ENCODE measurements at regions of chr2 and their contacts with region 1.

Region 1: DNA sequence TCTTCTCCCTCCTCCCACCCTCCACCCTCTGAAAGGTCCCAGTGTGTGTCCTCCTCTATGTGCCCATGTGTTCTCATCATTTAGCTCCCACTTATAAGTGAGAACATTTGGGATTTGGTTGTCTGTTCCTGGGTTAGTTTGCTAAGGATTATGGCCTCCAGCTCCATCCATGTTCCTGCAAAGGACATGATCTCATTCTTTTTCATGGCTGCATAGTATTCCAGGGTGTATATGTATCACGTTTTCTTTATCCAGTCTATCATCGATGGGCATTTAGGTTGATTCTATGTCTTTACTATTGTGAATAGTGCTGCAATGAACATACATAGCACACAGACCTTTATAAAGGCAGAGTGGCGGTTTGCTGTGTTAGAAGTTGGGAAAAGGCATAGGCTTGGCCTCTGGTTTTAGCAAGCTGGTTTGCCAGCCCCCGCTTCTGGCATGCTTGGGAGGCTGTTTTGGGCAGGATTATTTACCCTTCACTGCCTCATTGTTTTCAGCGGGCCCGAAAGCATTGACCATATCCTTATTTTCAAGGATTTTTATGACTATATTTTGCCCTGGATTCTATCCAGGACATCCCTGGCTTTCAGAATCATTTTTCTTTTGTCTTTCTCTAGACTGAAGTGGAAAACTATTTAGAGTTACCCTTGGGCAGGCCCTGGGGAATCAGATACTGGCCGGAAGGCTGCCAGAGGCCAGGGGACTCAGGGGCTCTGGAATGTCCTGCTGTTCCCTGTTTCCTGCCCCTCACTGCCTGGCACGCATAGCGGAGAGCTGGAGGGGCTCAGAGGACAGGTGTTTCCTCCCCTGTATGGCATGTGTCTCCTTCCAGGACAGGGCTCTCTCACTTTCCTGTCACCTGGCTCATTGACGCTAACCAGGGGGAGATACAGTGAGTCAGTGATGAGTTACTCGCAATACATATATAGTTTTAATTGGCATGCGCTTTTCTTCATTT is 38.5 kb downstream of the DYSF start:
- DNase-seq: peak; percentile 98
- H3K4me3 ChIP-seq: no peak overlapping the region
- H3K27ac ChIP-seq: peak overlapping the region; percentile 96
- H3K4me1 ChIP-seq: peaks cover 41% of the 10 kb centered on the region
- H3K27me3 ChIP-seq: no peaks in the 10 kb centered on the region
- CTCF ChIP-seq: no peak
- POLR2A ChIP-seq: peak; percentile 72

Region 2: DNA sequence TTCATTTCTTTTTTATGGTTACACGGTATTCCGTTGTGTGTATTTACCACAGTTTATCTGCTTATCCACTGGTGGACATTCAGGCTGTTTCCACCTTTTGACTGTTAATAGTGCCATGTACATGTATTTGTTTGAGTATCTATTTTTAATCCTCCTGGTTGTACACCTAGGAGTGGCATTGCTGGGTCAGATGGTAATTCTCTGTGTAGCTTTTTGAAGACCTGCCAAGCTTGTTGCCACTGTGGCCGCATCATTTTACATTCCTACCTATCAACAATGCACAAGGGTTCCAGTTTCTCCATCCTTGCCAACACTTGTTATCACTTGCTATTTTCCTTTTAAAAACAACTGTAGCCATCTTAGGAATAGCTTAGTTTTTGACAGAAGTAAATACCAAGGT is 348.0 kb before region 1 on chr2:
- CTCF ChIA-PET with region 1: no interaction called
- POLR2A ChIA-PET with region 1: no interaction called
- dilution Hi-C with region 1: no loop called
- intact Hi-C with region 1: no loop called
- DNase-seq: no peak
- H3K4me3 ChIP-seq: no peak overlapping the region
- H3K27ac ChIP-seq: no peak overlapping the region
- H3K4me1 ChIP-seq: no peaks in the 10 kb centered on the region
- H3K27me3 ChIP-seq: no peaks in the 10 kb centered on the region
- CTCF ChIP-seq: no peak
- POLR2A ChIP-seq: no peak

Region 3: GRCh38 chr2:71423817-71424420 is 67.9 kb before region 1 on chr2:
- CTCF ChIA-PET with region 1: no interaction called
- POLR2A ChIA-PET with region 1: no interaction called
- dilution Hi-C with region 1: no loop called
- intact Hi-C with region 1: loop called (anchors 1 kb)
- DNase-seq: peak; percentile 91
- H3K4me3 ChIP-seq: peak overlapping the region in 1 of 3 experiments; percentile 13
- H3K27ac ChIP-seq: peak overlapping the region; percentile 78
- H3K4me1 ChIP-seq: peaks cover 37% of the 10 kb centered on the region
- H3K27me3 ChIP-seq: no peaks in the 10 kb centered on the region
- CTCF ChIP-seq: peak in 1 of 2 donors; percentile 15
- POLR2A ChIP-seq: peak; percentile 52

Region 4: GRCh38 chr2:71466303-71467173 is 25.3 kb before region 1 on chr2:
- CTCF ChIA-PET with region 1: interaction called, 17 read pairs
- POLR2A ChIA-PET with region 1: interaction called, 3 read pairs
- dilution Hi-C with region 1: no loop called
- intact Hi-C with region 1: loop called (anchors 1 kb)
- DNase-seq: peak; percentile 52
- H3K4me3 ChIP-seq: peak overlapping the region; percentile 65 to 98 (median 83)
- H3K27ac ChIP-seq: peak overlapping the region; percentile 65
- H3K4me1 ChIP-seq: peaks cover 34% of the 10 kb centered on the region
- H3K27me3 ChIP-seq: no peaks in the 10 kb centered on the region
- CTCF ChIP-seq: no peak
- POLR2A ChIP-seq: peak; percentile 69

Region 5: DNA sequence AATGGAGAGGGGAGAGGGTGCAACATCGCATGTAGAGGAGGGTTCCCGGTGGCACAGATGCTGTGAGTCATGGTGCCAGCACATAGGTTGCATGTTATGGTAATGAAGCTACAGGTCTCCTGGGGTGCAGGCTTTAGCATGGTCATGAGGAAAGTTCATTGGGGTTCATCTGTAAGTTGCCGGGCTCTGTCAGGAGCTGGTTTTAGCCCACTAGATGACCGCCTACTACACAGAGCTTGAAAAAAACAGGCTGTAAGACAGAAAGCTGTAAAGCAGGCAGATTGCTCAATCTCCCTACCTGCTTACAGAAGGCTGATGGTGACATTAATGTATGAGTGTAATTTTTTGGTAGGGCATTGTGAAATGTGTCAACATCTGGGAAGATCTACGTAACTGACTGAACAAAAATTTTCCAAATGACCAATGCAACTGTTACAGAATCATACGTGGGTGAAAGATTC is 14.6 kb before region 1 on chr2:
- CTCF ChIA-PET with region 1: no interaction called
- POLR2A ChIA-PET with region 1: no interaction called
- dilution Hi-C with region 1: no loop called
- intact Hi-C with region 1: no loop called
- DNase-seq: no peak
- H3K4me3 ChIP-seq: no peak overlapping the region
- H3K27ac ChIP-seq: no peak overlapping the region
- H3K4me1 ChIP-seq: peaks cover 12% of the 10 kb centered on the region
- H3K27me3 ChIP-seq: no peaks in the 10 kb centered on the region
- CTCF ChIP-seq: no peak
- POLR2A ChIP-seq: no peak

Region 6: DNA sequence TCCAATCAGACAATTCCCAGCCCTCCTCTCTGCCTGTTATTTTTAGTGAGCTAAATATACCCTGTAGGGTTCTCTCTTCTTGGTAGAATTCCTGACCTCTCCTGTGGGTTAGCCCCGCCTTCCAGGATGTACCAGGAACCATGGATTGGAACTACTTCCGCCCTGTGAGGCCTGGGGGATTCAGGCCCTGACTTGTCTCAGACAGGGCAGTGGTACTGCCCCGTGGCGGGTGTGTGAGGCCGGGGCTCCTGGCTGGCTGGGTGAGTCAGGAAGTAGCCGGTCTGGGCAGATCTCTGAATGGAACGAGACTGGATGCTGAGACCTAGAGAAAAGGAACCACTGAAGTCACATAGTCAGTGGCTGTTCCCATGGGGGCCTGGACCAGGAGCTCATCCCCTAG is 12.0 kb after region 1 on chr2:
- CTCF ChIA-PET with region 1: interaction called, 3 read pairs
- POLR2A ChIA-PET with region 1: no interaction called
- dilution Hi-C with region 1: no loop called
- intact Hi-C with region 1: loop called (anchors 1 kb)
- DNase-seq: peak; percentile 62
- H3K4me3 ChIP-seq: no peak overlapping the region
- H3K27ac ChIP-seq: peak overlapping the region; percentile 85
- H3K4me1 ChIP-seq: peaks cover 54% of the 10 kb centered on the region
- H3K27me3 ChIP-seq: no peaks in the 10 kb centered on the region
- CTCF ChIP-seq: no peak
- POLR2A ChIP-seq: peak; percentile 70

Region 7: GRCh38 chr2:71530641-71531332 is 39.0 kb after region 1 on chr2:
- CTCF ChIA-PET with region 1: no interaction called
- POLR2A ChIA-PET with region 1: no interaction called
- dilution Hi-C with region 1: no loop called
- intact Hi-C with region 1: no loop called
- DNase-seq: peak; percentile 64
- H3K4me3 ChIP-seq: no peak overlapping the region
- H3K27ac ChIP-seq: peak overlapping the region; percentile 40
- H3K4me1 ChIP-seq: peaks cover 7% of the 10 kb centered on the region
- H3K27me3 ChIP-seq: no peaks in the 10 kb centered on the region
- CTCF ChIP-seq: peak; percentile 64 to 67
- POLR2A ChIP-seq: no peak

Measured in endothelial cell of umbilical vein (primary cell).